PC-3 (cell line): ENCODE measurements at regions of chr11 and their contacts with region 1.

Region 1: GRCh38 chr11:120511116-120511819 is at the start of gene GRIK4:
- DNase-seq: peak; percentile 80
- ATAC-seq: peak; percentile 90
- H3K4me3 ChIP-seq: peak within 1 kb of the TSS; percentile 51; the same call in 1 of the 2 replicates
- H3K27ac ChIP-seq: no peak within 1 kb of the TSS
- H3K4me1 ChIP-seq: no peaks in the 10 kb centered on the region
- H3K27me3 ChIP-seq: peaks cover 67% of the 10 kb centered on the region
- CTCF ChIP-seq: peak; percentile 95
- total RNA-seq, gene GRIK4: not detected in 2 replicates

Region 2: DNA sequence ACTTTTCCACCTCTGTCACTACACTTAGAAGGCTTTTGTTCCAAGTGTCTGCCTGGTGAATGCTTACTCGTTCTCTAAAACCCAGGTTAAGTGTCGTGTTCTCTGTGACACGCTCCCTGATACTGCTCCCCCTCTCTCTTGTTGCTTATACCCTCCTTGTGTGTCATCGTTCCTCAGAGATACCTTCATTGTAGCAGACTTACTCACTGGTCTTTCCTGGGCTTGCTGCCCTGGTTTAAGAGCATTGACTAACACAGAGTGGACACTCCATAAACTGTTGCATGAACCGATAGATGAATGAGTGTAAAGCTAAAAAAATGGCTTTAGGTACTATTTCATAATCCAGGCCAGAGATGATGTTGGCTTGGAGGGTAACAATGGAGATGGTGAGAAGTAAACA is 171.6 kb after region 1 on chr11:
- CTCF ChIA-PET with region 1: interaction called, 10 read pairs
- POLR2A ChIA-PET with region 1: no interaction called
- intact Hi-C with region 1: loop called (anchors 1 kb)
- DNase-seq: peak; percentile 44
- ATAC-seq: no peak
- H3K4me3 ChIP-seq: no peak overlapping the region
- H3K27ac ChIP-seq: no peak overlapping the region
- H3K4me1 ChIP-seq: no peaks in the 10 kb centered on the region
- H3K27me3 ChIP-seq: peaks cover 66% of the 10 kb centered on the region
- CTCF ChIP-seq: no peak